ENCODE measurements at regions of chr9 and their contacts with region 1.

Region 1: DNA sequence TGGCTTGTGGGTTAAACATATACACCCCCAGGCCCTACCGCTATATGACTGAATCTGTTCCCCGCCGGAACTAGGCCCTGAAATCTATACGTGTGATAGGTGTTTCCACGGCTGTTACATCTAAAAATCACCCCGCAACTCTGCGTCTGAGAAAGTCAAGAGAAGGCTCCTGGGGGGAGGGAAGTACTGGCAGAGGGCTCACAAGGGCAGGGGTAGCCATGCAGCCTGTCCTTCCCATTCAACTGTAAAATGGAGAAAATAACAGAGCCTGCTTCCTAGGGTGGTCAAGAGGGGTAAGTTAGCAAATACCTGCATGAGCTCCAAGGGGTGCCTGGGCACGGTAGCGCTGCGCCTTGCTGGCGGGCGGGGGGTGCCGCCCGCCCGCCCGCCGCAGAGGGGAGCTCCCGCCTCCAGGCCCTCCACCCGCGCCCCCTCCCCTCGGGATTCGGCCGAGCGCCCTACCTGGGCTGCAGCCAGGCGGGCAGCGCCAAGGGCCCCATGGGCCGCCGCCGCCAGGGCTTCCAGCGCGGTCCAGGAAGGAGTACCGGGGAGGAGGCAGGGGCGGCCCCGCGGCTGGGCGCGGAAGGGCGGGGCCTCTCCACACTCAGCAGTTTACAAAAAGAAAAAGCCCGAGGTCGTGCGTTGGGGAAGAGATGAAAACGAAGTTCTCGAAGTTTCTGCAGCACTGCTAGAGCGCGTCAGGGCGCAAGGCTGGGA is at the start of gene HACD4:
- DNase-seq: peak; percentile 53 to 76 (median 73)
- ATAC-seq: peak; percentile 87
- H3K4me3 ChIP-seq: peak within 1 kb of the TSS; percentile 62
- H3K4me3 Mint-ChIP-seq: peak within 1 kb of the TSS in 7 of 10 donors; percentile 65 to 86 (median 76)
- H3K27ac ChIP-seq: peak within 1 kb of the TSS; percentile 78
- H3K27ac Mint-ChIP-seq: peak within 1 kb of the TSS in 7 of 9 donors; percentile 71 to 88 (median 81)
- H3K4me1 ChIP-seq: peaks cover 12 to 16% of the 10 kb centered on the region in 2 donors
- H3K4me1 Mint-ChIP-seq: peaks cover 13 to 42% (median 30%) of the 10 kb centered on the region in 7 donors
- H3K27me3 ChIP-seq: no peaks in the 10 kb centered on the region
- H3K27me3 Mint-ChIP-seq: no peaks in the 10 kb centered on the region
- total RNA-seq, gene HACD4: 9.3 to 15.2 (median 13.6) TPM

Region 2: GRCh38 chr9:19048966-19049916 is 1982.0 kb before region 1 on chr9 and contains the start of gene RRAGA:
- CTCF ChIA-PET with region 1: no interaction called
- POLR2A ChIA-PET with region 1: no interaction called
- intact Hi-C with region 1: loop called in 1 of 2 experiments (anchors 5 kb)
- DNase-seq: peak; percentile 90 to 96 (median 95)
- ATAC-seq: peak; percentile 95
- H3K4me3 ChIP-seq: peak within 1 kb of the TSS; percentile 88
- H3K4me3 Mint-ChIP-seq: peak within 1 kb of the TSS; percentile 92 to 99 (median 95)
- H3K27ac ChIP-seq: peak within 1 kb of the TSS; percentile 85
- H3K27ac Mint-ChIP-seq: peak within 1 kb of the TSS; percentile 97 to 100 (median 98)
- H3K4me1 ChIP-seq: peaks cover 20% of the 10 kb centered on the region in 2 donors
- H3K4me1 Mint-ChIP-seq: peaks cover 6 to 50% (median 42%) of the 10 kb centered on the region in 7 donors
- H3K27me3 ChIP-seq: no peaks in the 10 kb centered on the region
- H3K27me3 Mint-ChIP-seq: peaks cover 0 to 2% (median 0%) of the 10 kb centered on the region in 5 donors
- total RNA-seq, gene RRAGA: 25.9 to 53.6 (median 51.9) TPM

Region 3: DNA sequence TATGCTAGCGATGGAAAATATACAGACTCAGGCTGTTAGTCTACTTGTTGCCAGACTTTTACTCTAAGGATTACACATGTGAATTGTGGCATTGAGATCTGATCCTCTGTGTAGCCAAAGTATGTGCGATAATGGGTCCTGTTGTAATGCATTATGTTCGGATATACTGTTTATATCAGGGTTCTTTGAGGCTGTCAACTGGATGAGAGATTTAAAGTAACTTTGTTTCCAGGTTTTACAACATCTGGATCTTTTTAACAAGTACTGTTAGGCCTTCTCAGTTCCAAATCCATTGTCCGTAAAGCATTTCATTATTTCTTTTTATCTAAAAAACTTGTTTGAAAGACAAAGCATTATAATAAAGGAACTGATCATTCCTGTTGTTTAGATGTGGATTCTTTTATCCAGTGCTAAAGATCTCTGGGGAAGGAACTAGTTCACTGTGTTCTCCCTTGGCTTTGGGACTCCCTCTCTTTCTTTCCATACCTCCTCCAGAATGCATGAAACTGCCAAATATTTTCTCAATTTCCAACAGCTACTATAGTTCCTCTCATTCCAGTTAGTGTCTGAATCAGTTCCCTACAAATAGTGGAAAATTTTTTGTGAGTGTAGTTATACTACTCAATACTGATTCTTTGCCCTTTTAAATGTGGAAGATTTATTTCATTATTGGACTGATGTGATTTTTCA is 68.6 kb before region 1 on chr9:
- CTCF ChIA-PET with region 1: no interaction called
- POLR2A ChIA-PET with region 1: no interaction called
- intact Hi-C with region 1: no loop called
- DNase-seq: no peak
- ATAC-seq: no peak
- H3K4me3 ChIP-seq: no peak overlapping the region
- H3K4me3 Mint-ChIP-seq: no peak overlapping the region
- H3K27ac ChIP-seq: no peak overlapping the region
- H3K27ac Mint-ChIP-seq: no peak overlapping the region
- H3K4me1 ChIP-seq: no peaks in the 10 kb centered on the region
- H3K4me1 Mint-ChIP-seq: peaks cover 0 to 3% (median 0%) of the 10 kb centered on the region in 7 donors
- H3K27me3 ChIP-seq: no peaks in the 10 kb centered on the region
- H3K27me3 Mint-ChIP-seq: no peaks in the 10 kb centered on the region

Region 4: GRCh38 chr9:20997503-20998076 is 33.7 kb before region 1 on chr9:
- CTCF ChIA-PET with region 1: no interaction called
- POLR2A ChIA-PET with region 1: interaction called, 9 read pairs
- intact Hi-C with region 1: loop called in 1 of 2 experiments (anchors 1 kb)
- DNase-seq: no peak
- ATAC-seq: no peak
- H3K4me3 ChIP-seq: no peak overlapping the region
- H3K4me3 Mint-ChIP-seq: peak overlapping the region in 5 of 10 donors; percentile 21 to 52 (median 37)
- H3K27ac ChIP-seq: no peak overlapping the region
- H3K27ac Mint-ChIP-seq: peak overlapping the region in 8 of 9 donors; percentile 21 to 92 (median 72)
- H3K4me1 ChIP-seq: peaks cover 27 to 33% of the 10 kb centered on the region in 2 donors
- H3K4me1 Mint-ChIP-seq: peaks cover 13 to 61% (median 48%) of the 10 kb centered on the region in 7 donors
- H3K27me3 ChIP-seq: no peaks in the 10 kb centered on the region
- H3K27me3 Mint-ChIP-seq: no peaks in the 10 kb centered on the region

Region 5: DNA sequence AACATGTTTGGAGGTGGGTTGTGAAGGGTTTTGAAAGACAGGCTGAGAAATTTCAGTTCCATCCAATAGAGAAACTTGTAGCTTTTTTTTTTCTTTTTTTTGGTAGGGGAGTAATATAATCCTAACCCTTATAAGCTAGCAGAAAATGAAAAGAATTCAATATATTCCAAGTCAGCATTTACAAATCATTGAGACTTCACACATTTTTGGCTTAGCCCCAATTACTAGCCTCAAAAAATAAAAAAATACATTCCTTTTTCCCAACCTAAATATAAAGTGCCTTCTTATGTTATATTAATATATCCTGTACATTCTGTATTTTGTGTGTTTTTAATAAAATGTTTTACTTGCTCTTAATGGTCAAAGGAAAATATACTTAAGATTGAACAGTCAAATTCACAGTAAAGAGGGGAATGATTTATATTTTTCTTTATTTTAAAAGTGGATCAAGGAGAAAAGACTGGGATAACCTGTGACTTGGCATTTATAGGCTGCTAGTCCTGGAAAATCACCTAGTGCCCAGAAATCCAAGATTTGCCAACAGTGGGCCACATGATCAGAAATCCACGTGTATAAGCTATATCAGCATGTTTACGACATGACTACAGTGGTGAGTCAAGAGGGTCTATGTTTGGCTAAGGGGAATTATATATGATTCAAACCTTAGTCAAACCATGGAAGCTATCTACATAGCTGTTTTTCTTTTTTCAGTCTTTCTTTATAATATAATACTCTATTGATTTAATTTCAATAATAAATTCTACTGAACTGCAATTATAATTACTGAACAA is 14.4 kb before region 1 on chr9:
- CTCF ChIA-PET with region 1: interaction called, 8 read pairs
- POLR2A ChIA-PET with region 1: interaction called, 4 read pairs
- intact Hi-C with region 1: loop called in 1 of 2 experiments (anchors 1 kb)
- DNase-seq: no peak
- ATAC-seq: no peak
- H3K4me3 ChIP-seq: no peak overlapping the region
- H3K4me3 Mint-ChIP-seq: no peak overlapping the region
- H3K27ac ChIP-seq: no peak overlapping the region
- H3K27ac Mint-ChIP-seq: peak overlapping the region in 3 of 9 donors; percentile 13 to 32 (median 17)
- H3K4me1 ChIP-seq: peaks cover 0 to 3% of the 10 kb centered on the region in 2 donors
- H3K4me1 Mint-ChIP-seq: peaks cover 0 to 33% (median 19%) of the 10 kb centered on the region in 7 donors
- H3K27me3 ChIP-seq: no peaks in the 10 kb centered on the region
- H3K27me3 Mint-ChIP-seq: no peaks in the 10 kb centered on the region

Region 6: GRCh38 chr9:21060919-21061561 is 29.8 kb after region 1 on chr9:
- CTCF ChIA-PET with region 1: no interaction called
- POLR2A ChIA-PET with region 1: interaction called, 3 read pairs
- intact Hi-C with region 1: loop called in 1 of 2 experiments (anchors 2 kb)
- DNase-seq: peak in 5 of 9 donors; percentile 19 to 29 (median 25)
- ATAC-seq: no peak
- H3K4me3 ChIP-seq: no peak overlapping the region
- H3K4me3 Mint-ChIP-seq: peak overlapping the region in 8 of 10 donors; percentile 3 to 74 (median 24)
- H3K27ac ChIP-seq: no peak overlapping the region
- H3K27ac Mint-ChIP-seq: peak overlapping the region in 8 of 9 donors; percentile 1 to 83 (median 54)
- H3K4me1 ChIP-seq: peaks cover 8 to 12% of the 10 kb centered on the region in 2 donors
- H3K4me1 Mint-ChIP-seq: peaks cover 14 to 26% (median 24%) of the 10 kb centered on the region in 7 donors
- H3K27me3 ChIP-seq: no peaks in the 10 kb centered on the region
- H3K27me3 Mint-ChIP-seq: peaks cover 0 to 3% (median 0%) of the 10 kb centered on the region in 5 donors

Region 7: DNA sequence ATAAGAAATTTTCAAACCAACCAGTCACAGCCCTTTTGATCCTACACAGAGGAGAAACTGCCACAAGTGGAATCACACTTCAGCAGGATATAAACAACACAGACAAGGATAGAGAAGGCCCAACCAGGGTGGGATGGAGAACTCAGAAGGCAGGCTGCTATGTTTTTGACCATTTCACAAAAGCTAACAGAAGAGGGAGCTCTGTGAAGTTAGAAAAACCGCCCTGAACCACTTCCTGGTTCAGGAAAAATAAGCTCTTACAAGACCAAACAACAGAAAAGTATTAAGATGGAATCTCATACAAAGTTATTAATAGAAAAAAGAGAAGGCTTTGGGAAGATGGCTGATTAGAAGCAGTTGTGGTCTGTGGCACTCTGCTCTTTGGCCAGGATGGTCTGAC is 47.5 kb after region 1 on chr9:
- CTCF ChIA-PET with region 1: no interaction called
- POLR2A ChIA-PET with region 1: no interaction called
- intact Hi-C with region 1: loop called (anchors 2 kb)
- DNase-seq: peak in 3 of 9 donors; percentile 2 to 19 (median 8)
- ATAC-seq: peak; percentile 42
- H3K4me3 ChIP-seq: no peak overlapping the region
- H3K4me3 Mint-ChIP-seq: peak overlapping the region in 1 of 10 donors; percentile 26
- H3K27ac ChIP-seq: no peak overlapping the region
- H3K27ac Mint-ChIP-seq: peak overlapping the region in 4 of 9 donors; percentile 15 to 42 (median 31)
- H3K4me1 ChIP-seq: peaks cover 0 to 18% of the 10 kb centered on the region in 2 donors
- H3K4me1 Mint-ChIP-seq: peaks cover 23 to 40% (median 35%) of the 10 kb centered on the region in 7 donors
- H3K27me3 ChIP-seq: no peaks in the 10 kb centered on the region
- H3K27me3 Mint-ChIP-seq: peaks cover 0 to 20% (median 0%) of the 10 kb centered on the region in 5 donors

Region 8: DNA sequence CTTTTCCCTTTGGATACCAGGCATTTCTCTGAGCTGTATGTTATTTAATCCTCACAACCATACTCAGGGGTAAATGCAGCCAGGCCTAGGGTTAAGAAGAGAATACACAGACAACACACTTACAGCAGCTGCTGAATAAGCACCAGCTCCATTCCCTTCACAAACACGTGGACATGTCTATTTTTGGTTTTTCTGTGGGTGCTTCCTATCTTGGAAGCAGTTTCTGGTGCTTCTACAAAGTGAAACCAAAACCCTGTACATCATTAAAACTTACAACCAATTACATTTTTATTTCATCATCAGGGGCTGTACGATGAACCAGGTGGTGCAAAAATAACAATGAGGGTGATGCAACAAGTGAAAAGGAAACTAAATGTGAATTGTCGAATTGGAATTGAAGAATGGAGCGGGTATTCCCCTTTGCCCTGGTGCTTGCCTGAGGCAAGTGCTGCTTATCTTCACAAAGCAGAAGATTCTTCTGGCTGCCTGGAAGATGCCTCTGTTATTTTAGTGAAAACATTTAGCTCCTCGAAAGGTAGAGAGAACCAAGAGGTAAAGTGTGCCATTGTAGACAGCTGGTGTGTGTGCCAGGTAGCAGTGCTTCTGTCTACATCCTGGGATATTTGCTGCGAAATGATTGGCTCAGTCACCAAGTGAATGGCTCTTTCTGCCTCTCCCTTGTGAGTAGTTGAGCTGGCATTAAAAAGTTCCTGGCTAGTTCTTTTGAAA is 65.1 kb after region 1 on chr9:
- CTCF ChIA-PET with region 1: no interaction called
- POLR2A ChIA-PET with region 1: interaction called, 4 read pairs
- intact Hi-C with region 1: loop called in 1 of 2 experiments (anchors 5 kb)
- DNase-seq: peak in 7 of 9 donors; percentile 31 to 75 (median 68)
- ATAC-seq: peak; percentile 97
- H3K4me3 ChIP-seq: peak overlapping the region; percentile 49
- H3K4me3 Mint-ChIP-seq: peak overlapping the region; percentile 66 to 82 (median 72)
- H3K27ac ChIP-seq: peak overlapping the region; percentile 8
- H3K27ac Mint-ChIP-seq: peak overlapping the region; percentile 46 to 92 (median 83)
- H3K4me1 ChIP-seq: peaks cover 15 to 17% of the 10 kb centered on the region in 2 donors
- H3K4me1 Mint-ChIP-seq: peaks cover 25 to 44% (median 39%) of the 10 kb centered on the region in 7 donors
- H3K27me3 ChIP-seq: no peaks in the 10 kb centered on the region
- H3K27me3 Mint-ChIP-seq: no peaks in the 10 kb centered on the region